A673 (cell line): ENCODE measurements at regions of chr6 and their contacts with region 1.

Region 1: GRCh38 chr6:26532699-26533531 is 5.3 kb upstream of the HMGN4 start:
- DNase-seq: peak; percentile 96
- H3K4me3 ChIP-seq: peak overlapping the region; percentile 64
- H3K27ac ChIP-seq: peak overlapping the region; percentile 93
- H3K4me1 ChIP-seq: peaks cover 28% of the 10 kb centered on the region
- H3K27me3 ChIP-seq: no peaks in the 10 kb centered on the region
- CTCF ChIP-seq: no peak

Region 2: GRCh38 chr6:26520853-26521599 is 11.9 kb before region 1 on chr6:
- CTCF ChIA-PET with region 1: no interaction called
- POLR2A ChIA-PET with region 1: interaction called, 12 read pairs
- intact Hi-C with region 1: no loop called
- DNase-seq: peak; percentile 88
- H3K4me3 ChIP-seq: peak overlapping the region; percentile 61
- H3K27ac ChIP-seq: peak overlapping the region; percentile 96
- H3K4me1 ChIP-seq: peaks cover 7% of the 10 kb centered on the region
- H3K27me3 ChIP-seq: no peaks in the 10 kb centered on the region
- CTCF ChIP-seq: no peak

Region 3: DNA sequence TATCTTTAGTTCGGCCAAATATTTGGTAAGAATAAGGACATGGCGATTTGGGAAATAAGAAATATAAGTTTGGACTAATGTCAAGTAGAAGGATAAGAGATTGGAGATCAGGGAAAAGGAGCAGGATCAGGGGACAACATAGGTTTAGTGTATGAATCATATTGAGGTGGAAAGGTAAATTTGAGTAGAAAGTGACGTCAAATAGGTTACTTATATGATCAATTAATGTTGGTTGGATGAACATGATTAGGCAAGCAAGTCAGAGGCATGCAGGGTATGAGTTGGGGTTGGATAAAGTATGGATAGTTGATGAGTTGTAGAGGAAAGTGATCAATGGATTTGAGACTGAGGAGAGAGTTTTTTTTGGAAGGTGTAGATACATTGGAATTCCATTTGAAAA is 129.7 kb after region 1 on chr6:
- CTCF ChIA-PET with region 1: interaction called, 15 read pairs
- POLR2A ChIA-PET with region 1: no interaction called
- intact Hi-C with region 1: no loop called
- DNase-seq: no peak
- H3K4me3 ChIP-seq: no peak overlapping the region
- H3K27ac ChIP-seq: no peak overlapping the region
- H3K4me1 ChIP-seq: no peaks in the 10 kb centered on the region
- H3K27me3 ChIP-seq: peaks cover 20% of the 10 kb centered on the region
- CTCF ChIP-seq: no peak